K562 (cell line): ENCODE measurements at regions of chr6 and their contacts with region 1.

Region 1: GRCh38 chr6:70221025-70221714 is 81.7 kb downstream of the COL9A1 start:
- DNase-seq: peak; percentile 46 to 70 (median 60)
- ATAC-seq: peak; percentile 81
- H3K4me3 ChIP-seq: no peak overlapping the region
- H3K27ac ChIP-seq: no peak overlapping the region
- H3K4me1 ChIP-seq: no peaks in the 10 kb centered on the region; a peak in 1 of 5 replicates
- H3K27me3 ChIP-seq: peaks cover 6 to 10% of the 10 kb centered on the region in 2 experiments; a peak in 3 of 5 replicates
- CTCF ChIP-seq: peak; percentile 54 to 83 (median 66); a peak in 5 of 6 replicates
- EP300 ChIP-seq: no peak
- POLR2A ChIP-seq: no peak
- RAD21 ChIP-seq: peak; percentile 76 to 79

Region 2: GRCh38 chr6:70253923-70254322 is 32.8 kb after region 1 on chr6:
- CTCF ChIA-PET with region 1: no interaction called
- POLR2A ChIA-PET with region 1: no interaction called
- in situ Hi-C with region 1: no loop called
- intact Hi-C with region 1: no loop called
- DNase-seq: no peak
- ATAC-seq: no peak
- H3K4me3 ChIP-seq: no peak overlapping the region
- H3K27ac ChIP-seq: no peak overlapping the region
- H3K4me1 ChIP-seq: no peaks in the 10 kb centered on the region
- H3K27me3 ChIP-seq: peaks cover 8 to 11% of the 10 kb centered on the region in 2 experiments; a peak in 3 of 5 replicates
- CTCF ChIP-seq: no peak
- EP300 ChIP-seq: no peak
- POLR2A ChIP-seq: no peak
- RAD21 ChIP-seq: no peak

Region 3: GRCh38 chr6:70304616-70305015 is 83.4 kb after region 1 on chr6:
- CTCF ChIA-PET with region 1: no interaction called
- POLR2A ChIA-PET with region 1: no interaction called
- in situ Hi-C with region 1: loop called (anchors 5 kb)
- intact Hi-C with region 1: loop called (anchors 2 kb)
- DNase-seq: no peak
- ATAC-seq: no peak
- H3K4me3 ChIP-seq: no peak overlapping the region
- H3K27ac ChIP-seq: no peak overlapping the region
- H3K4me1 ChIP-seq: no peaks in the 10 kb centered on the region
- H3K27me3 ChIP-seq: peaks cover 12 to 21% of the 10 kb centered on the region in 2 experiments; a peak in 4 of 5 replicates
- CTCF ChIP-seq: no peak
- EP300 ChIP-seq: no peak
- POLR2A ChIP-seq: no peak
- RAD21 ChIP-seq: no peak

Region 4: DNA sequence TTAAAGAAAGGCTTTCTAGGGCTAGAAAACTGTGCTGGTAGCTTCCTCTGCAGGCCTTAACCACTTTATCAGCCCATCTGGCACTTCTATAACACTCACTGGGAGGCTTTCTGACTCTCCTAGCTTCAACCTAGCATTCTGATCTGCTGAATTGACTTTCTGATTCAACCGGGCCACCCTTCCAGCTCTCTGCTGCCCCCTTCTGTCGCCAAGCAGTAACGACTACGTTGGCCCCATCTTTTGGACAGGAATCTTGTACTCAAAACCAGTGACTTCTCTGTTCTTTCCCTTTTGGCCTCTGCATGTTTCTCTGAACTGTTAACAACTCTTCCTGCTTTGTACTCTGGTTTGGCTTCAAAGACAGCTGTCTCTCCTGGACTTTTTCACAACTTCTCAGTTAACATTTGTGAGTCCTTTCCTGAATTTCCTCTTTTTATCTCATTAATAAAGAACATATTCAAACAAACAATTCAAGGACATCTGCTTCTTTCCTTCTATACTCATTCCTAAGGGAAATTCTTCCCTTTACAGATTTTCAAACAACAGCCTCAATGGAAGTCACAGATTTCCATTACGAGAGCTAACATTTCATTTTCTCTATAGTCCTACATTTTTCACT is 148.3 kb after region 1 on chr6:
- CTCF ChIA-PET with region 1: no interaction called
- POLR2A ChIA-PET with region 1: no interaction called
- in situ Hi-C with region 1: loop called (anchors 5 kb)
- intact Hi-C with region 1: loop called (anchors 2 kb)
- DNase-seq: peak; percentile 76 to 84 (median 77)
- ATAC-seq: peak; percentile 93
- H3K4me3 ChIP-seq: no peak overlapping the region
- H3K27ac ChIP-seq: no peak overlapping the region
- H3K4me1 ChIP-seq: peaks cover 0 to 2% of the 10 kb centered on the region in 2 experiments; a peak in 1 of 5 replicates
- H3K27me3 ChIP-seq: peaks cover 6% of the 10 kb centered on the region in 2 experiments; a peak in 2 of 5 replicates
- CTCF ChIP-seq: peak; percentile 94 to 98 (median 94)
- EP300 ChIP-seq: no peak
- POLR2A ChIP-seq: no peak
- RAD21 ChIP-seq: peak; percentile 96 to 98

Region 5: DNA sequence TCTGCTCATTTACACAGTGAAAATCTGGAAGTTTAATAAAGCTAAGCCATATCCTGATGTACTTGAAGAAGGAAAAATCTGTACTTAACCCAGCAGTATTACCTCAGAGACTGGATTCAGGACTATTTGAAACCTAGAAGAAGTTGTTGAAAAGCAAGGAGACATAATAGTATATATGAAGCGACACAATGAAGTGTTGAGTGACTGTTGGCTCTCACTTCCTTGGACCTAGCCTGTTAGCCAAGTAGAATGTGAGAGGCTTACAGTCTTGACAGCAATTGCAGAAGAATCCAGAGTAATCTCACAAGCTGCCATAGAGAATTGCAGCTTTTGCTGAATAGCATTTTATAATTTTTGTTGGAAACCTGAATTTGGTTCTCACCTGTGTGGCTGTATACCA is 473.2 kb after region 1 on chr6:
- CTCF ChIA-PET with region 1: no interaction called
- POLR2A ChIA-PET with region 1: no interaction called
- in situ Hi-C with region 1: loop called (anchors 10 kb)
- intact Hi-C with region 1: loop called (anchors 5 kb)
- DNase-seq: no peak
- ATAC-seq: no peak
- H3K4me3 ChIP-seq: no peak overlapping the region
- H3K27ac ChIP-seq: no peak overlapping the region
- H3K4me1 ChIP-seq: no peaks in the 10 kb centered on the region
- H3K27me3 ChIP-seq: no peaks in the 10 kb centered on the region; a peak in 1 of 5 replicates
- CTCF ChIP-seq: no peak
- EP300 ChIP-seq: no peak
- POLR2A ChIP-seq: no peak
- RAD21 ChIP-seq: no peak

Region 6: GRCh38 chr6:70955441-70956190 is 734.4 kb after region 1 on chr6:
- CTCF ChIA-PET with region 1: interaction called, 3 read pairs
- POLR2A ChIA-PET with region 1: no interaction called
- in situ Hi-C with region 1: no loop called
- intact Hi-C with region 1: loop called (anchors 2 kb)
- DNase-seq: peak; percentile 76 to 82 (median 78)
- ATAC-seq: peak; percentile 99
- H3K4me3 ChIP-seq: peak overlapping the region; percentile 43
- H3K27ac ChIP-seq: no peak overlapping the region
- H3K4me1 ChIP-seq: peaks cover 0 to 20% of the 10 kb centered on the region in 2 experiments; a peak in 2 of 5 replicates
- H3K27me3 ChIP-seq: peaks cover 5 to 14% of the 10 kb centered on the region in 2 experiments; a peak in 3 of 5 replicates
- CTCF ChIP-seq: peak; percentile 69 to 89 (median 75)
- EP300 ChIP-seq: no peak
- POLR2A ChIP-seq: no peak
- RAD21 ChIP-seq: peak; percentile 78 to 81

Region 7: GRCh38 chr6:71349395-71349794 is 1128.2 kb after region 1 on chr6:
- CTCF ChIA-PET with region 1: no interaction called
- POLR2A ChIA-PET with region 1: no interaction called
- in situ Hi-C with region 1: no loop called
- intact Hi-C with region 1: loop called (anchors 5 kb)
- DNase-seq: peak in 2 of 4 experiments; percentile 8 to 20
- ATAC-seq: no peak
- H3K4me3 ChIP-seq: no peak overlapping the region
- H3K27ac ChIP-seq: no peak overlapping the region
- H3K4me1 ChIP-seq: no peaks in the 10 kb centered on the region
- H3K27me3 ChIP-seq: no peaks in the 10 kb centered on the region
- CTCF ChIP-seq: peak in 1 of 3 experiments; percentile 42; a peak in 2 of 6 replicates
- EP300 ChIP-seq: no peak
- POLR2A ChIP-seq: no peak
- RAD21 ChIP-seq: peak; percentile 32 to 54